ENCODE measurements at regions of chr11 and their contacts with region 1.

Region 1: GRCh38 chr11:27812341-27812740 is 112.1 kb upstream of the BDNF start:
- DNase-seq: no peak
- H3K4me3 ChIP-seq: no peak overlapping the region
- H3K27ac ChIP-seq: no peak overlapping the region
- H3K4me1 ChIP-seq: no peaks in the 10 kb centered on the region
- H3K27me3 ChIP-seq: no peaks in the 10 kb centered on the region
- CTCF ChIP-seq: no peak

Region 2: GRCh38 chr11:27847496-27847895 is 35.2 kb after region 1 on chr11:
- CTCF ChIA-PET with region 1: no interaction called
- dilution Hi-C with region 1: no loop called
- in situ Hi-C with region 1: no loop called
- intact Hi-C with region 1: no loop called
- DNase-seq: no peak
- H3K4me3 ChIP-seq: no peak overlapping the region
- H3K27ac ChIP-seq: no peak overlapping the region
- H3K4me1 ChIP-seq: no peaks in the 10 kb centered on the region
- H3K27me3 ChIP-seq: peaks cover 5% of the 10 kb centered on the region
- CTCF ChIP-seq: no peak

Region 3: GRCh38 chr11:28457486-28458145 is 645.3 kb after region 1 on chr11:
- CTCF ChIA-PET with region 1: no interaction called
- dilution Hi-C with region 1: loop called (anchors 10 kb)
- in situ Hi-C with region 1: no loop called
- intact Hi-C with region 1: no loop called
- DNase-seq: peak; percentile 3
- H3K4me3 ChIP-seq: no peak overlapping the region
- H3K27ac ChIP-seq: no peak overlapping the region
- H3K4me1 ChIP-seq: peaks cover 6% of the 10 kb centered on the region
- H3K27me3 ChIP-seq: peaks cover 2% of the 10 kb centered on the region
- CTCF ChIP-seq: no peak

Measured in mammary epithelial cell (primary cell).